ENCODE measurements at regions of chr6 and their contacts with region 1.

Region 1: DNA sequence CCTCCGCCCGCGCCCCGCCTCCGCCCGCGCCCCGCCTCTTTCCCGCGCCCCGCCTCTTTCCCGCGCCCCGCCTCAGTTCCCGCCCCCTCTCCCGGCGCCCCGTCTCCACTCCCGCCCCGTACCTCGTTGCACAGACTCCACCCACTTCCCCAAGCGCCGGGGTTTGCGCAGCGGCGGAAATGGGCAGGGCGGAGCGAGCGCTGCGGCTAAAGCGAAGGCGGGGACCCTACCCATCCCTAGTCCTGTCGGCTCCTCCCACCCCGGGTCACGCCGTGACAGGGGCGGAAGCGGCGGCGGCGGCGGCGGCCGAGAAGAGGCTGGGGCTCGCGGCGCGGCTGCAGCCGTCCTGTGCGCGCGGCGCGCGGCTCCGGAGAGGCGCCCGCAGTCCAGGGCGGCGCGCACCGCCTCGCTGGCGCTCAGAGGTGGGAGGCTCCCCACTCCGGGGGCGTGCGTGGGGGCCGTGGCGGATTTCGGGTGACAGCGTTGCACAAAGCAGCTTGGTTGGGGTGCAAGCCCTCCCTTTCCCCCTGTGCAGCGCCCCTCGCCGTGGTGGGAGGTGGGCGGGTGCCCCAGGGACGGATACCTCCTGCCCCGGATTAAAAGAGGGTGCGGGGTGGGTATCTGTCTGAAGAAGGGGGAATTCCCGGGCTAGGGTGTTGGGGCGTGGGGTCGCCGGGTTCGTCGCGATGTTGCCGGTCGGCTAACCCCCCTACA is at the start of gene KDM1B:
- DNase-seq: peak; percentile 97 to 99 (median 99)
- ATAC-seq: peak; percentile 93
- H3K4me3 ChIP-seq: peak within 1 kb of the TSS; percentile 89 to 99
- H3K4me3 Mint-ChIP-seq: peak within 1 kb of the TSS; percentile 98
- H3K27ac ChIP-seq: peak within 1 kb of the TSS; percentile 90
- H3K27ac Mint-ChIP-seq: peak within 1 kb of the TSS; percentile 96
- H3K4me1 ChIP-seq: peaks cover 15% of the 10 kb centered on the region
- H3K4me1 Mint-ChIP-seq: peaks cover 38% of the 10 kb centered on the region
- H3K27me3 ChIP-seq: no peaks in the 10 kb centered on the region
- H3K27me3 Mint-ChIP-seq: no peaks in the 10 kb centered on the region
- CTCF ChIP-seq: no peak
- total RNA-seq, gene KDM1B: 4.5 to 6.2 TPM

Region 2: GRCh38 chr6:17706580-17707370 is 448.5 kb before region 1 on chr6 and contains the start of gene NUP153:
- CTCF ChIA-PET with region 1: no interaction called
- POLR2A ChIA-PET with region 1: no interaction called
- intact Hi-C with region 1: loop called (anchors 1 to 2 kb)
- DNase-seq: peak; percentile 98 to 100 (median 100)
- ATAC-seq: peak; percentile 77
- H3K4me3 ChIP-seq: peak within 1 kb of the TSS; percentile 84 to 96
- H3K4me3 Mint-ChIP-seq: peak within 1 kb of the TSS; percentile 88
- H3K27ac ChIP-seq: peak within 1 kb of the TSS; percentile 99
- H3K27ac Mint-ChIP-seq: peak within 1 kb of the TSS; percentile 96
- H3K4me1 ChIP-seq: peaks cover 39% of the 10 kb centered on the region
- H3K4me1 Mint-ChIP-seq: peaks cover 40% of the 10 kb centered on the region
- H3K27me3 ChIP-seq: no peaks in the 10 kb centered on the region
- H3K27me3 Mint-ChIP-seq: no peaks in the 10 kb centered on the region
- CTCF ChIP-seq: no peak
- total RNA-seq, gene NUP153: 76.4 to 77.7 TPM

Region 3: DNA sequence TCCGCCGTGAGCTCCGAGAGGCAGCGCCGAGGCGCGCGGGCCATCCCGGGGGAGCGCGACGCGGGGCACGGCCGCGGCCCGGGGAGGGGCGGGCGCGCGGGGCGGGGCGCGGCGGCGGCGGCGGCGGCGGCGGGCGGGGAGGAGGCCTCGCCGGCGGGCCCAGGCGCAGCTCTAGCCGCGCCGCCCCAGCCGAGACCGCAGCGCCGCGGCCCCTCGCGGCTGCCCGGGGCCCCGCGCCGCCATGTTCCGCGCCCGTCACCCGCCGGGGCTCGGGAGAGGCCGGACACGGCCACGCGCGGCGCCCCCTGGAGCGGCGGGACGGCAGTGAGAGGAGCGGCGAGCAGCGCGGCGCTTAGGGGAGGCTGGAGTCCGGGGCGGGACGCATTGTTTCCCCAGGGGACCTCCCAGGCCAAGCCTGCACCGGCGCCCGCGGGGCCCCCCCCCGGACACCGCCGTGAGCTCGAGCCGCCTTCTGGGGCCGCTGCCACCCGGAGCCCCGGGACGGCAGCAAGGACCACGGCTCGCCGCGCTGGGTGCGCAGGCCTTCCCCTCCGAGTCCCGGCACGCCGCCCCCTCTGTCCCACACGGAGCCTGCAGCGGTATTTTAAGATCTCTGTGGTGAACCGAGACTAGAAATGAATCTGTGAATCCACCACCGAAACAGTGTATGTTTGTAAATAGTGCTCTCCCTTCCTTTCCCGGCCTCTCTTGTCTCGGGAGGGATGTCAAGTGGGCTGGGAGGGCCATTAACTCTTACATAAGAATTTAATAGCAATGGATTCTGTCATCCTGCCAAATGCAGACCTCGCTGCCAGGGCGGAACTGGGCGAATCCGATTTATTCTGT is 167.5 kb before region 1 on chr6 and contains the start of gene KIF13A:
- CTCF ChIA-PET with region 1: no interaction called
- POLR2A ChIA-PET with region 1: no interaction called
- intact Hi-C with region 1: loop called in 1 of 2 experiments (anchors 5 kb)
- DNase-seq: peak in 5 of 9 experiments; percentile 15 to 55 (median 46)
- ATAC-seq: peak; percentile 57
- H3K4me3 ChIP-seq: peak within 1 kb of the TSS; percentile 29 to 60
- H3K4me3 Mint-ChIP-seq: peak within 1 kb of the TSS; percentile 90
- H3K27ac ChIP-seq: no peak within 1 kb of the TSS
- H3K27ac Mint-ChIP-seq: no peak within 1 kb of the TSS
- H3K4me1 ChIP-seq: peaks cover 8% of the 10 kb centered on the region
- H3K4me1 Mint-ChIP-seq: peaks cover 16% of the 10 kb centered on the region
- H3K27me3 ChIP-seq: peaks cover 8% of the 10 kb centered on the region in 2 experiments
- H3K27me3 Mint-ChIP-seq: peaks cover 56% of the 10 kb centered on the region
- CTCF ChIP-seq: no peak
- total RNA-seq, gene KIF13A: 0.14 to 0.33 TPM

Region 4: GRCh38 chr6:18122124-18123093 is 32.9 kb before region 1 on chr6 and contains the start of gene NHLRC1:
- CTCF ChIA-PET with region 1: no interaction called
- POLR2A ChIA-PET with region 1: interaction called, 3 read pairs
- intact Hi-C with region 1: loop called (anchors 1 kb)
- DNase-seq: peak; percentile 46 to 83 (median 74)
- ATAC-seq: peak; percentile 99
- H3K4me3 ChIP-seq: peak within 1 kb of the TSS; percentile 38 to 62
- H3K4me3 Mint-ChIP-seq: peak within 1 kb of the TSS; percentile 85
- H3K27ac ChIP-seq: no peak within 1 kb of the TSS
- H3K27ac Mint-ChIP-seq: peak within 1 kb of the TSS; percentile 22
- H3K4me1 ChIP-seq: peaks cover 4% of the 10 kb centered on the region
- H3K4me1 Mint-ChIP-seq: peaks cover 13% of the 10 kb centered on the region
- H3K27me3 ChIP-seq: no peaks in the 10 kb centered on the region
- H3K27me3 Mint-ChIP-seq: peaks cover 4% of the 10 kb centered on the region
- CTCF ChIP-seq: peak; percentile 65
- total RNA-seq, gene NHLRC1: 0.28 TPM in 1 of 2 experiments, not detected in the other

Region 5: GRCh38 chr6:18211338-18211737 is 56.0 kb after region 1 on chr6:
- CTCF ChIA-PET with region 1: no interaction called
- POLR2A ChIA-PET with region 1: no interaction called
- intact Hi-C with region 1: loop called in 1 of 2 experiments (anchors 5 kb)
- DNase-seq: peak in 1 of 9 experiments; percentile 9
- ATAC-seq: peak; percentile 24
- H3K4me3 ChIP-seq: no peak overlapping the region
- H3K4me3 Mint-ChIP-seq: peak overlapping the region; percentile 37
- H3K27ac ChIP-seq: no peak overlapping the region
- H3K27ac Mint-ChIP-seq: peak overlapping the region; percentile 55
- H3K4me1 ChIP-seq: no peaks in the 10 kb centered on the region
- H3K4me1 Mint-ChIP-seq: peaks cover 11% of the 10 kb centered on the region
- H3K27me3 ChIP-seq: no peaks in the 10 kb centered on the region
- H3K27me3 Mint-ChIP-seq: no peaks in the 10 kb centered on the region
- CTCF ChIP-seq: no peak

Region 6: DNA sequence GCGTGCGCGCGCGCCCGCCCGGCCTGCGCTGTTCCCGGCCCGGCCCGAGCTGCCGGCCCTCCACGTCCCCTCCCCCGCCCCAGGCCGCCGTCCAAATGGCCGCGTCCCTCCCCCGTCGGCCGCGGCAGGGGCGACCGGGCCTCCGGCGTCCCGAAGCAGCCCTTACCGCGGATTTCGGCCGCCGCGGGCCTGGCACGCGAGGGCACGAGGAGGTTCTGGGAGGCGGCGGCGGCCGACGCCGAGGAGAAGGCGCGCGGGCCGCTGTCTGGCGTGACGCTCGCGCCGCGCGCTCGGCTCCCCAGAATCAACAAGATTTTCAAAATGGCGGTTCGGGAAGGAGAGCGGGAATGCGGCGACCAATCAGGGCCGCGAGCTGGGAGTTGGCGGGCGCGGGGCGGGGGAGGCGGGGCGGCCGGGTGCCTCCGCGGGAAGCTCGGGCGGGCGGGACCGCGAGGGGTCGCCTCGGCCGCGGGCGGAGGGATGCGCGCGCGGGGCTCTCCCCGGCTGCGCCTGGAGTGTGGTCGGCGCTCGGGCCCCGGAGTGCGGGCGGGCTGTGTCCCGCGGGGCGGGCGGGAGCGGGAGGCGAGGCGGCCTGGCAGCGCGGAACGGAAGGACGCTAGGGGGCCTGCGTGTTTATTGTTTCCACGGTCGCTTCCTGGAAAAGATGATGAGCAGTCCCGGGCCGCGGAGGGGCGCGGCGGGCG is 109.1 kb after region 1 on chr6 and contains the start of gene DEK:
- CTCF ChIA-PET with region 1: no interaction called
- POLR2A ChIA-PET with region 1: interaction called, 11 read pairs
- intact Hi-C with region 1: loop called (anchors 1 kb)
- DNase-seq: peak; percentile 59 to 90 (median 84)
- ATAC-seq: peak; percentile 66
- H3K4me3 ChIP-seq: peak within 1 kb of the TSS; percentile 67 to 79
- H3K4me3 Mint-ChIP-seq: peak within 1 kb of the TSS; percentile 90
- H3K27ac ChIP-seq: peak within 1 kb of the TSS; percentile 53 to 89
- H3K27ac Mint-ChIP-seq: peak within 1 kb of the TSS; percentile 95
- H3K4me1 ChIP-seq: peaks cover 33% of the 10 kb centered on the region
- H3K4me1 Mint-ChIP-seq: peaks cover 52% of the 10 kb centered on the region
- H3K27me3 ChIP-seq: no peaks in the 10 kb centered on the region
- H3K27me3 Mint-ChIP-seq: no peaks in the 10 kb centered on the region
- CTCF ChIP-seq: peak; percentile 45
- total RNA-seq, gene DEK: 39.5 to 47.5 TPM

Region 7: GRCh38 chr6:18277237-18278006 is 122.1 kb after region 1 on chr6:
- CTCF ChIA-PET with region 1: no interaction called
- POLR2A ChIA-PET with region 1: no interaction called
- intact Hi-C with region 1: no loop called
- DNase-seq: no peak
- ATAC-seq: no peak
- H3K4me3 ChIP-seq: no peak overlapping the region
- H3K4me3 Mint-ChIP-seq: no peak overlapping the region
- H3K27ac ChIP-seq: no peak overlapping the region
- H3K27ac Mint-ChIP-seq: no peak overlapping the region
- H3K4me1 ChIP-seq: no peaks in the 10 kb centered on the region
- H3K4me1 Mint-ChIP-seq: peaks cover 7% of the 10 kb centered on the region
- H3K27me3 ChIP-seq: peaks cover 5 to 22% of the 10 kb centered on the region in 2 experiments
- H3K27me3 Mint-ChIP-seq: peaks cover 49% of the 10 kb centered on the region
- CTCF ChIP-seq: no peak

Region 8: DNA sequence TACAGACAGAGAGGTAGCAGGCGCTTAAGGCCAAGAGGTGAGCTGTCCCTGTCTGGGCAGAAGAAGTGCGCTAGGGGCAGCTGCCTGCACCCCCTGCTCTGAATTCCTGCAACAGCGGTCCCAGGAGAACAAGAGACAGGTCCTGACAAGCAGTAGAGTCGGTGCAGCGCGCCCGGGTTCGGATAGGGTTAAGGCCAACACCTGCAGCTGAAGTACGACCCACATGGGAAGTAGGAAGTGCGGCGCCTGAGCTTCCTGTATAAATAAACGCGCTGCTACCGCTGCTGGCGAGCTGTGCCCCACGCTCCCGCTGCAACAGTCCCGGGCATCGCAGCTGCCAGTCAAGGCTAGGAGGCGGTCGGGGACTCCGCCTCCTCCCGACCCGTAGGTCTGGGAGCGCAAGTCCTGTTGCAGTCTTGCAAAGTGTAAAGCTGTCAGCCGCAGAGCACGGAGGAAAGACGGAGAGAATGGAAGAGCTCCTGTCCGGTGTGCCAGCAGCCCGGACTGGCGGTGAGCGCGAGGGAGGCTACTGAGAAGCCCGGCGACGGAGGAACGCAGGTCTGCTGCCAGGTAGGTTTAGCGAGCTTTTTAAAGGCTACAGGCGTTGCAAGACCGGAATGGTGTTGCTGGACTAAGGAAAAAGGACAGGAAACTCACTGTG is 231.9 kb after region 1 on chr6 and contains the start of gene RNF144B:
- CTCF ChIA-PET with region 1: no interaction called
- POLR2A ChIA-PET with region 1: no interaction called
- intact Hi-C with region 1: loop called in 1 of 2 experiments (anchors 1 kb)
- DNase-seq: peak; percentile 19 to 85 (median 68)
- ATAC-seq: peak; percentile 90
- H3K4me3 ChIP-seq: peak within 1 kb of the TSS; percentile 62 to 76
- H3K4me3 Mint-ChIP-seq: peak within 1 kb of the TSS; percentile 100
- H3K27ac ChIP-seq: peak within 1 kb of the TSS; percentile 29 to 45
- H3K27ac Mint-ChIP-seq: peak within 1 kb of the TSS; percentile 93
- H3K4me1 ChIP-seq: peaks cover 13% of the 10 kb centered on the region
- H3K4me1 Mint-ChIP-seq: peaks cover 42% of the 10 kb centered on the region
- H3K27me3 ChIP-seq: no peaks in the 10 kb centered on the region
- H3K27me3 Mint-ChIP-seq: no peaks in the 10 kb centered on the region
- CTCF ChIP-seq: no peak
- total RNA-seq, gene RNF144B: 1.3 to 2.0 TPM